WTC11 (cell line): ENCODE measurements at regions of chr7 and their contacts with region 1.

Region 1: DNA sequence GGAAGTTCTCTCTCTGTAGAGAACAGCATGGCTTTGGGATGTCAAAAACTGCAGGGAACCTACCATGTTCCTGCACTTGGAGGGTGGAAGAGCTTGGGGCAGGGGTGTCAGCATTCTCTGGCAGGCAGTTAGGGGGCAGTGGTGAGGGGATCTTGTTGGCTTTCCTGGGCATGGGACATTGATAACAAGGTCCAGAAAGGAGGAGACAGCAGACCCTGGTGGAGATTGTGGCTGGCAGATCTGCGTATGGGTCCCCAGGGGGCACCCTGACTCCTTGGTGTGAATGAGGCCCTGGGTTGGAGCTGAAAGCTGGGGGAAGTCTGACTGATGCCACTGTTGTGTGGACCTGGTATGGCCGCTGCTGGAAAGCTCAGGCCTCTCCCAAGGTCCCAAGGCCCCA is 22.9 kb upstream of the CAMK2B start:
- DNase-seq: peak; percentile 66
- ATAC-seq: peak; percentile 94
- H3K4me3 Mint-ChIP-seq: no peak overlapping the region
- H3K27ac Mint-ChIP-seq: no peak overlapping the region
- H3K4me1 Mint-ChIP-seq: no peaks in the 10 kb centered on the region
- H3K27me3 Mint-ChIP-seq: peaks cover 7% of the 10 kb centered on the region
- CTCF ChIP-seq: peak; percentile 40

Region 2: GRCh38 chr7:44163591-44163990 is 184.7 kb before region 1 on chr7:
- CTCF ChIA-PET with region 1: no interaction called
- POLR2A ChIA-PET with region 1: no interaction called
- DNase-seq: no peak
- ATAC-seq: peak; percentile 48; the same call in 1 of the 2 replicates
- H3K4me3 Mint-ChIP-seq: no peak overlapping the region
- H3K27ac Mint-ChIP-seq: no peak overlapping the region
- H3K4me1 Mint-ChIP-seq: peaks cover 11% of the 10 kb centered on the region
- H3K27me3 Mint-ChIP-seq: peaks cover 4% of the 10 kb centered on the region
- CTCF ChIP-seq: no peak

Region 3: DNA sequence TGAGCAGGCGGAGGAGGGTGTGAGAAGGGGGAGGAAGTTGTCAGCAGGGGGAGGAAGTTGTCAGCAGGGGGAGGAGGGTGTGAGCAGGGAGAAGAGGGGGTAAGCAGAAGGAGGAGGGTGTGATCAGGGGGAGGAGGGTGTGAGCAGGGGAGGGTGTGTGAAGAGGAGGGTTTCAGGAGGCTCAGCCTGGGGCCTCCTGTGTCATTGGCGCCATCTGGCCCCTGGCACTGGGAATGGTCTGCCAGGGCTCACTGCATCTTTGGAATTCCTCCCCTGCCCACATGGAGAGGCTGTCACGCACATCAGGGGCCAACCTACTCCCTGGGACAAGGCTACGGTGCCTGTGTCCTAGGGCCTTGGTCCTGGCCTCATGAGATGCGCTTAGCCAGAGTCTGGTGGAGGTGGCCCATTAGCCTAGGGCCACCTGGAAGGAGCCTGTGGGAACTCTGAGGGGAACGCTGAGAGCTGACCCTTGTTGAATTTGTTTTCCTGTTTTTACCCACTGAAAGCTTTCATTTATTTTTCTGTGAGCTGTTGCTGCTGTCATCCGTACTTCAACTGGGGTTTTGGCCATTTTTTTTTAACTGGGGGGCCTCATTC is 40.9 kb before region 1 on chr7:
- CTCF ChIA-PET with region 1: interaction called, 14 read pairs
- POLR2A ChIA-PET with region 1: no interaction called
- DNase-seq: peak; percentile 54
- ATAC-seq: peak; percentile 50
- H3K4me3 Mint-ChIP-seq: no peak overlapping the region
- H3K27ac Mint-ChIP-seq: no peak overlapping the region
- H3K4me1 Mint-ChIP-seq: peaks cover 4% of the 10 kb centered on the region; the same call in 1 of the 2 replicates
- H3K27me3 Mint-ChIP-seq: peaks cover 61% of the 10 kb centered on the region
- CTCF ChIP-seq: no peak

Region 4: DNA sequence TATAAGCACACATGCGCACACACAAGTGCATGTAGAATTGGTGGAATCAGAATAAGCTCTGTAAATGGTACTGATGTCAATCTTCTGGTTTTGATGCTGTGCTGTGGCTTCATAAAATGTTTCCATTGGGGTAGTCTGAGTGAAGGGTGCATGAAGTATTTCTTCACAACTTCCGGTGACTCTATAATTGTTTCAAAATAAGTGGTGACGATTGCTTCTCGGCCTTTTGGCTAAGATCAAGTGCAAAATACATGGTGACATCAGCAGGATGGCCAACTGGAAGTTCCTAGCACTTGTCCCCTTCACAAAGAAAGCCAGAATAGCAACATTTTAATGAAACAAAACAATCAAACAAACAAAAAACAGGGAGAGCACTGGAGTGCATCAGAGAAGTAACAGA is 18.7 kb after region 1 on chr7:
- CTCF ChIA-PET with region 1: interaction called, 50 read pairs
- POLR2A ChIA-PET with region 1: no interaction called
- DNase-seq: no peak
- ATAC-seq: no peak
- H3K4me3 Mint-ChIP-seq: no peak overlapping the region
- H3K27ac Mint-ChIP-seq: no peak overlapping the region
- H3K4me1 Mint-ChIP-seq: no peaks in the 10 kb centered on the region
- H3K27me3 Mint-ChIP-seq: peaks cover 6% of the 10 kb centered on the region; the same call in 1 of the 2 replicates
- CTCF ChIP-seq: no peak

Region 5: DNA sequence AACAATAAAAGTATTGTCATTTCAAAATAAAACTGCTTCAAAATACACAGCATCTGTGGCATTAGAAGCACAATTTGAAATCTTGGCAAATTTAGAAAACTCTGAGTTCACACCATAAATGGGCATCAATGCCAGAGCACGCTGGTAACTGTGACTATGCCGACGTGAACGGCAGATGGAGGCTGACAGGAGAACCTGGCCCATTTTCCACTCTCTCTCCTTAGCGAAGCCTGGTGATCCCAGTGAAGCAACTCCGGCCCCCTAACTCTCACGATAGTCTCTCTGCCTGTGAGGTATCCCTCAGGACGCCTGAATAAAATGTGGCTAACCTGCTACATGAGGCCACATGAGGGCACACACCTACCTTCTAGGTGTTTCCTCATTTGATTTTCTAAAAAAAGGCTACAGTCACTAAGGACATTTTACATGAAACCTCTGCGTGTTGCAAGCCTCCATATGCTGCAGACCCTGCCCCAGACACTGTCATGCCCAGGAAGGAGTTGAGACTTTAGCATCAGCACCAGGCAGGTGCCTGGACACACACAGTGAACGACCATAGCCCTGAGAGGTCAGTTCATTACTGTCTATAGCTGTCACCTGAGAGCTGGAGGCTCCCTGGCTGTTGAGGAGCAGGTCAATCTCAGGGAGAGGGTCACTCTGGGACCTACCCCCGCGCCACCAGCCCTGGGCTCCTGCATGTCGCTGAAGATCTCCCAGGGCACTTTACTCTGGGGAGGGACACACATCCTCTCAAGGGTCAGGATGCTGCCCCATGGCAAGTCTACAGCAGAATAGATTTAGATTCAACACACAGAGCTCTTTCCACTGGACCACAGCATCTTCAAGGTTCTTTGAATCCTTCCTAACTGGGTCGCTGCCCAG is 40.0 kb after region 1 on chr7:
- CTCF ChIA-PET with region 1: no interaction called
- POLR2A ChIA-PET with region 1: no interaction called
- DNase-seq: no peak
- ATAC-seq: no peak
- H3K4me3 Mint-ChIP-seq: no peak overlapping the region
- H3K27ac Mint-ChIP-seq: no peak overlapping the region
- H3K4me1 Mint-ChIP-seq: no peaks in the 10 kb centered on the region
- H3K27me3 Mint-ChIP-seq: no peaks in the 10 kb centered on the region
- CTCF ChIP-seq: no peak

Region 6: GRCh38 chr7:44408596-44408995 is 60.3 kb after region 1 on chr7:
- CTCF ChIA-PET with region 1: interaction called, 15 read pairs
- POLR2A ChIA-PET with region 1: no interaction called
- DNase-seq: peak; percentile 48
- ATAC-seq: peak; percentile 97
- H3K4me3 Mint-ChIP-seq: peak overlapping the region; percentile 33
- H3K27ac Mint-ChIP-seq: peak overlapping the region; percentile 95
- H3K4me1 Mint-ChIP-seq: peaks cover 32% of the 10 kb centered on the region
- H3K27me3 Mint-ChIP-seq: no peaks in the 10 kb centered on the region
- CTCF ChIP-seq: no peak

Region 7: GRCh38 chr7:44454348-44454747 is 106.0 kb after region 1 on chr7:
- CTCF ChIA-PET with region 1: no interaction called
- POLR2A ChIA-PET with region 1: no interaction called
- DNase-seq: no peak
- ATAC-seq: no peak
- H3K4me3 Mint-ChIP-seq: no peak overlapping the region
- H3K27ac Mint-ChIP-seq: no peak overlapping the region
- H3K4me1 Mint-ChIP-seq: no peaks in the 10 kb centered on the region
- H3K27me3 Mint-ChIP-seq: no peaks in the 10 kb centered on the region
- CTCF ChIP-seq: no peak

Region 8: DNA sequence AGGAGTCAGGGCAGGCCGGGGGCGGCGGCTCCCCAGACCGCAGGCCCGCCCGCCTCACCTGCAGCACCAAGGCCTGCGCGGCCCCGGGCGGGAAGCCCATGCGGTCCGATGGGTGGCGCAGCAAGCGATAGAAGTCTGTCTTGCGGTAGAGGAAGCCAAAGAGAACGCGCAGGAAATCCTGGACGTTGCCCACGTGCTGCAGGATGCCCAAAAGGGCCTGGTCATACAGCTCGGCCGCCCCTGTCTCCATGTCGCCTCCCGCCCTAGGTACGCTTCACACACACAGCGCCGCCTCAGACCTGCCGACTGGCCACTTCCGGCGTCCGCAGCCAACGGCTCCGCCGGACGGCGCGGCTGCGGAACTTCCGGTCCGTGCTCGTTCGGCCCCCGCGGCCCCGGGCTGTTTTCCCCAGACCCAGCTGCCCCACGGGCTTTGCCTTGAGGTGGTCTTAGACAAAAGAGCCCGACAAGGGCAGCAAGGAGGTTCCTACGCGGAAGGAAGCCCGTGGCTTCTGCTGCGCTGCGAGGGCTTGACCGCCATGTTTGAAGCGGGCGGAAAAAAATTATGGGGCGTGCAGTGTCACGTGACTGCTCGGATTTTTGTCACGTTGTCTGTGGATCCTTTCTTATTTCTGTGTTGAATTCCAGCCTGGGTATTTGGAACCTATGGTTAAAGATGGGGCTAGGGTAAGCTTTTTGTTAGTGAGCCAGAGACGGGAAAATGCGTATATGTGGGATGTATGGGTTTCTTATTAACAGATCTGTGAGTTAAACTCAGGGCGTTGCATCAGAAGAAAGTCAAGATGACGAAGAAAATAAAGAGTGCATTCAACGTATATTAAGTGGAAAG is 142.3 kb after region 1 on chr7 and contains the start of gene NUDCD3:
- CTCF ChIA-PET with region 1: interaction called, 17 read pairs
- POLR2A ChIA-PET with region 1: no interaction called
- DNase-seq: peak; percentile 83
- ATAC-seq: peak; percentile 91
- H3K4me3 Mint-ChIP-seq: peak within 1 kb of the TSS; percentile 89
- H3K27ac Mint-ChIP-seq: peak within 1 kb of the TSS; percentile 99
- H3K4me1 Mint-ChIP-seq: peaks cover 22% of the 10 kb centered on the region
- H3K27me3 Mint-ChIP-seq: peaks cover 5% of the 10 kb centered on the region
- CTCF ChIP-seq: no peak
- total RNA-seq, gene NUDCD3: 71.8 to 83.9 TPM (median 82.7 TPM) in 3 replicates

Region 9: GRCh38 chr7:44565097-44565794 is 216.9 kb after region 1 on chr7:
- CTCF ChIA-PET with region 1: interaction called, 33 read pairs
- POLR2A ChIA-PET with region 1: interaction called, 5 read pairs
- DNase-seq: peak; percentile 80
- ATAC-seq: peak; percentile 87
- H3K4me3 Mint-ChIP-seq: no peak overlapping the region
- H3K27ac Mint-ChIP-seq: peak overlapping the region; percentile 64; the same call in 1 of the 2 replicates
- H3K4me1 Mint-ChIP-seq: no peaks in the 10 kb centered on the region
- H3K27me3 Mint-ChIP-seq: no peaks in the 10 kb centered on the region
- CTCF ChIP-seq: peak; percentile 95